ENCODE measurements at regions of chr15 and their contacts with region 1.

Region 1: DNA sequence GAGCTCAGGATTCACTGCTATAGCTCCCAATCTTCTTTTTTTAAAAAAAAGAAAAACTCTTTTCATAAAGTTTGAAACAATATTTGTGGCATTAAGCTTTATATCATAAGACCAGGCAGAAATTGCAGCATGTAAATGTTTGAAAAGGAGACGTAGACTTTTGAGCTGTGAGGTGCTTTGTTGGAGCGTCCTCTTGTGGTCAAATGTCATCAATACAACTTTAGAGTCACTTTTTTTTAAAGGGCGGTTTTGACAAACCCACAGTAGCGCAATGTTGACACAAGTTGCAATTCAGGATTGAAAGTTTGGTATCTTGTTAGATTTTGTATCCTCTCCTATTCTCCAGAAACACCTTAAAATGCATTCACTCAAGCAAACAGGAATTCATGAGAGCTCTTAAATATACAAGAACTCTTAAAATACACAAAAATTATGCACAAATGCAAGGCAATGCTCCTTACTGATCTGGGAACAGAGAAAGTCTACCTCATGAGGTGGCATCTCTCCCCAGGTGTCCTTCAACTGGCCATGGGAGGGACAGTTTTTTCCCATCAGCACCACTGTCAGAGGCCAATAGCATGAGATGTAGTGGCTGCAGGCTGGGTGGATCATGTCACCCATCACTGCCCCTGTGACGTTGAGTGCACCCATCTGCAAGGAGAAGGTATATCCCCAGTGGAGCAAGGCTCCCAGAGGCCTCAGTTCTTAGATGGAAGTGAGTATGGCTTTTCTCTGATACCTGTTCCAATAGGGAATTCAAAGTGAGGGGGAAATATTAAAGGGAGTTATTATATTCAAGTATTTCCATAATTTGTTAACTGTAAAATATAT is 70.7 kb downstream of the ANXA2 start:
- DNase-seq: peak; percentile 76
- H3K4me3 Mint-ChIP-seq: no peak overlapping the region
- H3K27ac Mint-ChIP-seq: no peak overlapping the region
- H3K4me1 Mint-ChIP-seq: no peaks in the 10 kb centered on the region
- H3K27me3 Mint-ChIP-seq: no peaks in the 10 kb centered on the region
- CTCF ChIP-seq: peak; percentile 94

Region 2: DNA sequence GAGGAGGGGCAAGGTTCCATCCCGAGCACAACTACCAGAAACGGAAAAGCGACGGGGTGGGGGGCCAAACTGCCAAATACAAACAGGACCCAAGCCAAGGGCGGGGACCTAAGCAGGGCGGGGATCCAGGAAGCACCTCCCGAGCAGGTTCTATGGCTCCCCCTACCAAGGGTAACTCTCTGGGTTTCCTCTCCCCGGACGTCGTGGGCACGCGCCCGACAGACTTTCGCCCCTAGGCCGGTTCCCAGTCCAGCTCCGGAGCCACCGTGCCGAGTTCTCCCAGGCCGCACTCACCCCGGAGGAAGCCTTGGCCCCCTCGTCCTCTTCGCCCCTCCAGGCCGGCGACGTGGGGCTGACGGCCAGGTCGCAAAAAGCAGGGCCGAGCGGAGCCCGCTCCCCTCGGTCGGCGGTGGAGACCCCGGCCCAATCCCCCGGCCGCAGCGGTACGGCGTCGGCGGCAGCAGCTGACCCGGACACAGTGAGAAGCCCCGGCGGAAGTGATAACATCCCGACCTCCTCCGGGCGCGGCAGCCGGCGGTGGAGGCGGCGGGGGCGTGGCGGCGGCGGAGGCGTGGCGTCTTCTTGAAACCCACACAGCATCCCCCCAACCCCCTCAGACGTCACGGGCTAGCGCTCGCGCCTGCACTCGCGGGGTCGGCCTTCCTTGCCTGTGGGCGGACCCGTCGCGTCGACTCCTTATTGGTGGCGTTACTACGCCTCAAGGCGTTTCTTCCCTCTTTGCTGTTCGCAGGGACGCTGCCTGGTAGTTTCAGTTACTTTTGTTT is 638.0 kb before region 1 on chr15 and contains the start of gene BNIP2:
- CTCF ChIA-PET with region 1: interaction called, 57 read pairs
- POLR2A ChIA-PET with region 1: interaction called, 23 read pairs
- intact Hi-C with region 1: loop called (anchors 1 kb)
- DNase-seq: peak; percentile 96
- H3K4me3 Mint-ChIP-seq: peak within 1 kb of the TSS; percentile 86
- H3K27ac Mint-ChIP-seq: peak within 1 kb of the TSS; percentile 98
- H3K4me1 Mint-ChIP-seq: peaks cover 18% of the 10 kb centered on the region
- H3K27me3 Mint-ChIP-seq: no peaks in the 10 kb centered on the region
- CTCF ChIP-seq: no peak
- total RNA-seq, gene BNIP2: 80.7 and 91.5 TPM in 2 replicates

Region 3: DNA sequence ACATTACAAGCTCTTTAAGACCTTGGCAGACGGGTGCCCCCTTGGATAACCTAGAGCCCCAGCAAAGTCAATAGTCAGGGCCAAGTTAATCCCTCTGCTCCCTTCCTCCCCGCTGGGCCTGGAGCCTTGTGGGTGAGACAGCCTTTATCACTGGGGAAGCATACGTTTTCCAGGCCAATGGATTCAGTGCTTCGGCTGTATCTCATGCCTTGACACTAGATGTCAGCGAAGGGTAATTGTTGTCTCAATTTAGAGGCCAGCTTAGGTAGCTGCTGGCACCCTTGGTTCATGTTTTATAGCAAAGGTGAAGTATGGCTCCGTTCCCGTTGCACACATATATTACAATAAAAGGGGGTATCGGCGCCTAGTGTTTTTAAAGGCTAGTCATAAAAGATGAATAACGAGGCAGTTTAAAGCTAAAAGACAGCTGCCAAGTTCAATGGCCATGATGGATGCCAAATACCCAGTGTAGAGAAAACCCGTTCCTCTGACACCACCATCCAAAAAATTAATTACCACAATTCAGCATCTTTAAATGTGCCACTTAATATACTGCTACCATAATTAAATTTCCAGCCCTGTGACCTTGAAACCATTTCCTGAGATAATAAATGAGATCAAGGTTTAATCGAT is 585.6 kb before region 1 on chr15:
- CTCF ChIA-PET with region 1: interaction called, 49 read pairs
- POLR2A ChIA-PET with region 1: interaction called, 3 read pairs
- intact Hi-C with region 1: loop called (anchors 1 kb)
- DNase-seq: peak; percentile 57
- H3K4me3 Mint-ChIP-seq: no peak overlapping the region
- H3K27ac Mint-ChIP-seq: no peak overlapping the region
- H3K4me1 Mint-ChIP-seq: no peaks in the 10 kb centered on the region
- H3K27me3 Mint-ChIP-seq: no peaks in the 10 kb centered on the region
- CTCF ChIP-seq: peak; percentile 43

Region 4: DNA sequence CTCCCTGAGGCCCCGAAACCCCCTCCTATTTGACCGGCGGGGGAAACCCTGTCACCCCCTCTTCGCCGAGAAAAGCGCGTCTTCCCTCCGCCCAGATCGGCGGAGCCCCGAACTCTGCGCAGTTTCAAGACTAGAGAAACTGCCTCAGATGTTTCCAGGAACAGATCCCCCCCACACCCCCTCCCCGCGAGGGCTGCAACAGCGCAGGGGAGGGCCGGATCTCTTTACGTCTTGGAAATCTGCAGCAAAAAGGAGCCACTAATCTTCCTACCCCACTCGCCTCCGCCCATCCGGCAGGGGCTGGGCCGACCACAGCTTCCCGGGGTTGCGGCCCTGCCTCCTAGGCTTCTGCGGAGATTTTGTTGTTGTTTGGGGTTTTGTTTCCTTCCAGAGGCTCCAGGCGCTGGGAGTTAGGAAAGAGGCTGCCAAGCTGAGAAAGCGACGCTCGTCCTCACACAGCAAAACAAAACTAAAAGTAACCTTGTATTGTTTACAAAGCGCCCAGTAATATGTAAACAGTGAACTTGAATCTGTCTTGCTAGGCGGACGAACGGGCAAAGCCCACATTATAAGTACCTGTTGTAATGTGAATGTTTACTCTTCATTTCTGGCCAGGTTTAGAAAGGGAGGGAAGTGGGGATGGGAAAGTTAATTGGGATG is 320.7 kb before region 1 on chr15:
- CTCF ChIA-PET with region 1: no interaction called
- POLR2A ChIA-PET with region 1: interaction called, 3 read pairs
- intact Hi-C with region 1: loop called (anchors 10 kb)
- DNase-seq: peak; percentile 78
- H3K4me3 Mint-ChIP-seq: peak overlapping the region; percentile 93
- H3K27ac Mint-ChIP-seq: peak overlapping the region; percentile 96
- H3K4me1 Mint-ChIP-seq: peaks cover 19% of the 10 kb centered on the region
- H3K27me3 Mint-ChIP-seq: peaks cover 40% of the 10 kb centered on the region
- CTCF ChIP-seq: no peak

Region 5: GRCh38 chr15:60179786-60180391 is 147.2 kb before region 1 on chr15:
- CTCF ChIA-PET with region 1: interaction called, 36 read pairs
- POLR2A ChIA-PET with region 1: interaction called, 4 read pairs
- intact Hi-C with region 1: loop called (anchors 2 kb)
- DNase-seq: peak; percentile 58
- H3K4me3 Mint-ChIP-seq: no peak overlapping the region
- H3K27ac Mint-ChIP-seq: no peak overlapping the region
- H3K4me1 Mint-ChIP-seq: no peaks in the 10 kb centered on the region
- H3K27me3 Mint-ChIP-seq: no peaks in the 10 kb centered on the region
- CTCF ChIP-seq: peak; percentile 69

Region 6: GRCh38 chr15:60315878-60316277 is 11.2 kb before region 1 on chr15:
- CTCF ChIA-PET with region 1: interaction called, 13 read pairs
- POLR2A ChIA-PET with region 1: interaction called, 14 read pairs
- intact Hi-C with region 1: no loop called
- DNase-seq: no peak
- H3K4me3 Mint-ChIP-seq: no peak overlapping the region
- H3K27ac Mint-ChIP-seq: peak overlapping the region; percentile 63
- H3K4me1 Mint-ChIP-seq: peaks cover 8% of the 10 kb centered on the region
- H3K27me3 Mint-ChIP-seq: no peaks in the 10 kb centered on the region
- CTCF ChIP-seq: no peak

Region 7: DNA sequence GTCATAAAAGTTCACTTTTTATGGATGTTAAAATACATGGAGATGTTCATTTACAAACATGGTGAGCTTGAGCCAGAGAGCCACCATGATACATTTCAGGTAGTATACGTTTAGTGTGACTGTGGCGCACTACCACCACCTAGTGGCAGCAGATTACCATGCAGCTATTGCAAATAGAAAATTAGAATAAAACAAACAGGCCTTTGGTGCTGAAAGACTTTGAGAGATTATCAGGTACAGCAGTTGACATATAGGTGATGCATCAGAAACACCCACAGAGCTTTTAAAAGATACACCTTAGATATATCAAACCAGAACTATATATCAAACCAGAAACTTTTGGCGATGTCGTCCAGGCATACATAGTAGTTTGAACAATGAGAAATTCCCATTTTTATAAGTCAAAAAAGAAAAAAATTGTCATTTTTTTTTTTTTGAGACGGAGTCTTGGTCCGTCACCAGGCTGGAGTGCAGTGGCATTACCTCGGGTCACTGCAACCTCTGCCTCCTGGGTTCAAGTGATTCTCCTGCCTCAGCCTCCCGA is 193.9 kb after region 1 on chr15:
- CTCF ChIA-PET with region 1: interaction called, 7 read pairs
- POLR2A ChIA-PET with region 1: interaction called, 3 read pairs
- intact Hi-C with region 1: loop called (anchors 1 kb)
- DNase-seq: peak; percentile 75
- H3K4me3 Mint-ChIP-seq: no peak overlapping the region
- H3K27ac Mint-ChIP-seq: peak overlapping the region; percentile 73
- H3K4me1 Mint-ChIP-seq: peaks cover 40% of the 10 kb centered on the region
- H3K27me3 Mint-ChIP-seq: no peaks in the 10 kb centered on the region
- CTCF ChIP-seq: peak; percentile 79

Measured in MCF 10A (cell line).